ENCODE measurements at regions of chr19 and their contacts with region 1.

Region 1: GRCh38 chr19:984165-984967 is at the start of gene WDR18:
- DNase-seq: peak; percentile 100
- CTCF ChIP-seq: no peak

Region 2: DNA sequence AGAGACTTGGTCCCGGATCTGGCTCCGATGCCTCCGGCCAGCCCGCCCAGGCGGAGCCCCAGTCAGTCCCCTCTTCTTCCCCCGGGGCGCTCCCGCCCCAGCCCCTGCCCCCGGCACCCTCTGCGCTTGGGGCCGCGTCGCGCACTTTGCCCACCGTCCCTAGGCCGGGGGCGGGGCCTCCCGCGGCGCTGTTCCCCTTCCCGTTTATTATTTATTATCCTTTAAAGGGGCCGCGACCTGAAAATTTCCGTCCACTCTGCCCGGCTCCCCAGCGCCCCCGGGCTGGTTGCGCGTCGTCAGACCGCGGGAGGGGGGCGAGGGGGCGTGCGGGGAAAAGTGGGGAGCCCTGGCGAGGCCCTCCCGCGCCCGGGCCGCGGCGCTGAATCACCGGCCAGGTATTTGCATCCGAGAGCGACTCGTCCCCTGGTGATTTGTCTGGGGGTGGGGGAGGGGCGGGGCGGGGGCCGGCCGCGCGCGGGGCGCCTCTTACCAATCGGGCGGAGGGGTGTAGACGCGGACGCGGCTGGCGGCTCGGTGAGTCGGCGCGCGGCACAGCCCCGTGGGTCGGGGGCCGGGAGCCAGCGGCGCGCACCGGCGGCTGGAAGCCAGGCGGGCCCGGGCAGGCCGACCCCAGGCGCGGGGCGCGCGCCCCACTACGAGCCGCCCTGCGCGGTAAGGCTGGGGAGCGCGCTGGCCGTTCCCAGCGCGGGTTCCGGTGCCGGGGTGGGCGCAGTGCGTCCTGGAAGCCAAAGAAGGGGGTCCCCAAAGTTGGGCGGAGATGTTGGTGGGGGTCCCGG is 58.6 kb before region 1 on chr19 and contains the start of gene ARID3A:
- CTCF ChIA-PET with region 1: interaction called, 136 read pairs
- POLR2A ChIA-PET with region 1: interaction called, 4 read pairs
- DNase-seq: peak; percentile 88
- CTCF ChIP-seq: no peak

Region 3: DNA sequence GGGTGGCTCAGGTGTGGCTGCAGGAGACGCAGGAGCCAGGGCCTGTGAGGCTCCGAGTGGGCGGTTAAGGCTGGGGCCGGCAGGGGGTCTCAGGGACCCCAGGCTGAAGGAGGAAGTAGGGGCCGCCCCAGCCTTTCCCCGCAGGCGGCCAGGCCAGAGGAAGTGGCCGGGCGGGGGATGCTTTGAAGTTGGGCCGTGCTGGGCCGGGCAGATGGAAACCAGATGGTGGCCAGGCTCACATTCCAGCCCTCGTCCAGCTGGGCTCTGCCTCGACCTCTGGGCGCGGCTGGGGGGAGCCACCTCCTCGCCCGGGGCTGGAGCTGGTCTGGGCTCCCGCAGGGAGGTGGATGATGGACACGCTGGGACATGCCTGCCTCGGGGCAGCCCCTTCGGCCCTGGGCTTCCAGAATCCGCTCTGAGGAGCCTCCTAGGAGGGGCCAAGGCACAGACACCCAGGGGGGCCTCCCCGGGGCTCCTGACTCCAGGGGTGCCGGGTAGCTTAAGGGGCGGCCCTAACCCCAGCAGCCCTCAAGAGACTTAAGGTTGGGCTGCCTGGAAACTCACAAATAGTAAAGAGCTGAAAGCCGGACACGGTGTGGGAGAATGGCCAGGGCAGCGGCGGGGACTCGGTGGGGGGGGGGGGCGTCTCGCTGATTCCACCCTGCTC is 51.0 kb before region 1 on chr19:
- CTCF ChIA-PET with region 1: interaction called, 22 read pairs
- POLR2A ChIA-PET with region 1: interaction called, 4 read pairs
- DNase-seq: no peak
- CTCF ChIP-seq: no peak

Region 4: DNA sequence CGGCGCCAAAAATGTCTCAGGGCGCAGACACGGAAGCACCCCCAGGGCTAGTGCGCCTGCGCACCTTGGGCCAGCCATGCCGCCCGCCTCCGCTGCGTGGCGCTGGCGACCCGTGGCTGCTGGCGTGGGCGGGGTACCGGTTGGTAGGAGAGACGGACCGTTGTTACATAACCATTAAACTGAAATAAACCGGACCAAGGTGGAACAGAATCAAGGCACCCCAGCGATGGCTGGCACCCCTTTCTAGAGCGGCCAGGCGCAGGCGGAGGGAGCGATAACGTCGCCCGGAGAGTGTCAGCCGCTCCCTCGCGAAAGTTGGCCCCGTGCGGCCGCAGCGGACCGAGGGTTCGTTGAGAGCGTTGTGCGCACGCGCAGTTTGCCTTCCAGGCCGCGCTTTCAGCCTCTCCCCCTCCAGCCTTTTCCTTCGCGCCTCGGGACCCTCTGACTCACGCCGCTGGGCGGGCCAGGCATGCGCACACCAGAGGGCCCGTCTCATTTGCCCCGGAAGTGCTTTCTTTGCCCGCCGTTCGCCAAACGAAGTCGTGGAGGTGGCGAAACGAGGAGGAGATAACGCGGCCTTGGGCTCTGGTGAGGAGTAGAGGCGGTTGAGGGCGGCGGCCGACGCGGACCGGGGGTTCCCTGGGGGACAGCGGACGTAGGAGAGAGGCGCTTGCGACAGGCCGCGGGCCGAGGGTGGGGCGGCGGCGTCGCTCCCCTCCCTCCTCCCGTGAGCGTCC is 1252.1 kb after region 1 on chr19 and contains the starts of genes PLEKHJ1 and SF3A2:
- CTCF ChIA-PET with region 1: no interaction called
- POLR2A ChIA-PET with region 1: interaction called, 14 read pairs
- DNase-seq: peak; percentile 99
- CTCF ChIP-seq: peak; percentile 99

Measured in GM10248 (cell line).